ENCODE measurements at regions of chr9 and their contacts with region 1.

Region 1: DNA sequence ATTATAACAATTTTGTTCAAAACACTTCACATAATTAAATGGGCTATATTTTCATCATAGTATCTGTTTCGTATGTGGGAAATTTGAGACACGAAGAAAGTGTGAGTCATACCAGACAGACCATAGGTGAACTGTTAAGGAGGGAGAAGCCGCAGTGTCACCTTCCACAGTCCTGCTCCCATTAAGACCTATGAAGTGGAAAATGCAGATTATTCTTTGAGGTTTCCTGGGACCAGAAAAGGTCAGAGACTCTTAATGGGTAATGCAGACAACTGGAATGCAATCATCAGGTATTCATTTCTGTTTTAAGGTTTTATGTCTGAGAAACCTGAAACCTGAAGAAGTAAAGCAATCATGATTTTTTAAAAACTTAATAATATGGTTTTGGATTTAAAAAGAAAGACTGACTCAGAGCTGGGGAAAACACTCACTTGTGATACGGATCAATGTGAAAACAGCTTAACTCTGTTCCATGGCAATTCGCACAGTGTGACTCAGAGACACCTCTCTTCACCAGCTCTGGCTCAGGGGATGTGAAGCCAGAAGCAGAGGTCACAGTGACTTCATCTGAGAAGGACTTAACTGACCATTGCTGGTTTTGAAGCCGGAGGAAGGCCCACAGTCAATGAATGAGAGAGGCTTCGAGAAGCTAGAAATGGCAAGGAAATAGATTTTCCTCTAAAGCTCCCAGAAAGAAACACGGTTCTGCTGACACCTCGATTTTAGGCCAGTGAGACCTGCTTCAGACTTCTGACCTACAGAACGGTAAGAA is 17.2 kb upstream of the GCNT1 start:
- DNase-seq: no peak
- ATAC-seq: no peak
- H3K4me3 ChIP-seq: no peak overlapping the region
- H3K4me3 Mint-ChIP-seq: no peak overlapping the region
- H3K27ac ChIP-seq: no peak overlapping the region
- H3K27ac Mint-ChIP-seq: no peak overlapping the region
- H3K4me1 ChIP-seq: no peaks in the 10 kb centered on the region
- H3K4me1 Mint-ChIP-seq: no peaks in the 10 kb centered on the region
- H3K27me3 ChIP-seq: no peaks in the 10 kb centered on the region
- H3K27me3 Mint-ChIP-seq: no peaks in the 10 kb centered on the region
- CTCF ChIP-seq: no peak

Region 2: DNA sequence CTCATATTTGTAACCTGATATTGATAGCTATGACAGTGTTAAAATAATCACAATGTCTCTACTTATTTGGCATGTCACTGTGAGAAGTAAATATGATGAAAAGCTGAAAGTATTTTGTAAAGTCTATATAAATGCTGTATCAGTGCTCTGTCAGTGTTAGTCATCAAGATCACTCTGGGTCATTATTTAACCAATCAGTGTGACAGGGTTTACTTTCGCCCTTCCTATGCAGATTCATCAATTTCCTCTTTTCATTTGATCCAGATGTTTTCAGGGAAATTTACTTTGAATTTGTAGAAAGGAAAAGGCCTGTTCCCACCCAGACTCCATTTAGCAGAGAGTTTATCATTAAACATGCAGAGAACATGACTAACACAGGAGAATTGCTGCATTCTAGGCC is 561.1 kb before region 1 on chr9:
- CTCF ChIA-PET with region 1: no interaction called
- POLR2A ChIA-PET with region 1: no interaction called
- intact Hi-C with region 1: no loop called
- DNase-seq: no peak
- ATAC-seq: no peak
- H3K4me3 ChIP-seq: no peak overlapping the region
- H3K4me3 Mint-ChIP-seq: no peak overlapping the region
- H3K27ac ChIP-seq: no peak overlapping the region
- H3K27ac Mint-ChIP-seq: no peak overlapping the region
- H3K4me1 ChIP-seq: no peaks in the 10 kb centered on the region
- H3K4me1 Mint-ChIP-seq: no peaks in the 10 kb centered on the region
- H3K27me3 ChIP-seq: no peaks in the 10 kb centered on the region
- H3K27me3 Mint-ChIP-seq: no peaks in the 10 kb centered on the region
- CTCF ChIP-seq: no peak

Region 3: GRCh38 chr9:76342862-76343261 is 98.9 kb before region 1 on chr9:
- CTCF ChIA-PET with region 1: no interaction called
- POLR2A ChIA-PET with region 1: no interaction called
- intact Hi-C with region 1: no loop called
- DNase-seq: no peak
- ATAC-seq: no peak
- H3K4me3 ChIP-seq: no peak overlapping the region
- H3K4me3 Mint-ChIP-seq: no peak overlapping the region
- H3K27ac ChIP-seq: no peak overlapping the region
- H3K27ac Mint-ChIP-seq: no peak overlapping the region
- H3K4me1 ChIP-seq: no peaks in the 10 kb centered on the region
- H3K4me1 Mint-ChIP-seq: no peaks in the 10 kb centered on the region
- H3K27me3 ChIP-seq: no peaks in the 10 kb centered on the region
- H3K27me3 Mint-ChIP-seq: peaks cover 31% of the 10 kb centered on the region
- CTCF ChIP-seq: no peak

Region 4: GRCh38 chr9:76403352-76403751 is 38.4 kb before region 1 on chr9:
- CTCF ChIA-PET with region 1: no interaction called
- POLR2A ChIA-PET with region 1: no interaction called
- intact Hi-C with region 1: loop called in 1 of 2 experiments (anchors 5 kb)
- DNase-seq: peak in 4 of 14 experiments; percentile 30 to 81 (median 76)
- ATAC-seq: peak; percentile 97
- H3K4me3 ChIP-seq: peak overlapping the region; percentile 2
- H3K4me3 Mint-ChIP-seq: peak overlapping the region; percentile 3
- H3K27ac ChIP-seq: peak overlapping the region in 1 of 2 donors; percentile 4
- H3K27ac Mint-ChIP-seq: peak overlapping the region; percentile 68
- H3K4me1 ChIP-seq: no peaks in the 10 kb centered on the region
- H3K4me1 Mint-ChIP-seq: peaks cover 9% of the 10 kb centered on the region
- H3K27me3 ChIP-seq: no peaks in the 10 kb centered on the region
- H3K27me3 Mint-ChIP-seq: no peaks in the 10 kb centered on the region
- CTCF ChIP-seq: peak; percentile 64

Region 5: GRCh38 chr9:76658535-76659231 is 216.9 kb after region 1 on chr9:
- CTCF ChIA-PET with region 1: no interaction called
- POLR2A ChIA-PET with region 1: no interaction called
- intact Hi-C with region 1: loop called in 1 of 2 experiments (anchors 2 kb)
- DNase-seq: peak in 3 of 14 experiments; percentile 62
- ATAC-seq: no peak
- H3K4me3 ChIP-seq: no peak overlapping the region
- H3K4me3 Mint-ChIP-seq: no peak overlapping the region
- H3K27ac ChIP-seq: no peak overlapping the region
- H3K27ac Mint-ChIP-seq: no peak overlapping the region
- H3K4me1 ChIP-seq: peaks cover 2% of the 10 kb centered on the region
- H3K4me1 Mint-ChIP-seq: peaks cover 23% of the 10 kb centered on the region
- H3K27me3 ChIP-seq: no peaks in the 10 kb centered on the region
- H3K27me3 Mint-ChIP-seq: peaks cover 4% of the 10 kb centered on the region
- CTCF ChIP-seq: peak; percentile 48

Region 6: GRCh38 chr9:77011973-77012821 is 570.5 kb after region 1 on chr9:
- CTCF ChIA-PET with region 1: no interaction called
- POLR2A ChIA-PET with region 1: no interaction called
- intact Hi-C with region 1: loop called (anchors 5 to 10 kb)
- DNase-seq: peak; percentile 24 to 69 (median 40)
- ATAC-seq: peak; percentile 46
- H3K4me3 ChIP-seq: peak overlapping the region; percentile 11
- H3K4me3 Mint-ChIP-seq: no peak overlapping the region
- H3K27ac ChIP-seq: no peak overlapping the region
- H3K27ac Mint-ChIP-seq: no peak overlapping the region
- H3K4me1 ChIP-seq: peaks cover 7% of the 10 kb centered on the region
- H3K4me1 Mint-ChIP-seq: peaks cover 9% of the 10 kb centered on the region
- H3K27me3 ChIP-seq: peaks cover 58 to 67% of the 10 kb centered on the region in 2 experiments
- H3K27me3 Mint-ChIP-seq: peaks cover 86% of the 10 kb centered on the region
- CTCF ChIP-seq: peak; percentile 69

Region 7: DNA sequence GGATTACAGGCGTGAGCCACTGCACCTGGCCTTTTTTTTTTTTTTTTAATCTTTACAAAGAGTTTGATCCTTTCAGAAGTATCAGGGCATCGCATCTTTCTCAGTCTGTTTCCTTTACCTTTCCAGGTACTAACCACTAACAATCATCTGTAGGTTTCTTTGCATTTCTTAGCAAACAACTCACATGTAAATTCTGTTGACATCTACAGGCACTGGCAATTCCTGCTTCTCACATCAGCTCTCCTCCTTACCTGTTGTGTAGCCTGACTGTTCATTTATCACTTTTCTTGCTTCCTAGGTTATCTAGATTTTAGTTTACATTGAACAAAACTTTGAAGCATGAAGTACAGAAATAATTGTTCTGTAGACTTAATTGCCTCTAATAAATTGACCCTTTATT is 708.1 kb after region 1 on chr9:
- CTCF ChIA-PET with region 1: no interaction called
- POLR2A ChIA-PET with region 1: no interaction called
- intact Hi-C with region 1: loop called in 1 of 2 experiments (anchors 2 kb)
- DNase-seq: no peak
- ATAC-seq: no peak
- H3K4me3 ChIP-seq: no peak overlapping the region
- H3K4me3 Mint-ChIP-seq: no peak overlapping the region
- H3K27ac ChIP-seq: no peak overlapping the region
- H3K27ac Mint-ChIP-seq: no peak overlapping the region
- H3K4me1 ChIP-seq: no peaks in the 10 kb centered on the region
- H3K4me1 Mint-ChIP-seq: no peaks in the 10 kb centered on the region
- H3K27me3 ChIP-seq: peaks cover 0 to 4% of the 10 kb centered on the region in 2 experiments
- H3K27me3 Mint-ChIP-seq: peaks cover 45% of the 10 kb centered on the region
- CTCF ChIP-seq: no peak